ENCODE measurements at regions of chr21 and their contacts with region 1.

Region 1: DNA sequence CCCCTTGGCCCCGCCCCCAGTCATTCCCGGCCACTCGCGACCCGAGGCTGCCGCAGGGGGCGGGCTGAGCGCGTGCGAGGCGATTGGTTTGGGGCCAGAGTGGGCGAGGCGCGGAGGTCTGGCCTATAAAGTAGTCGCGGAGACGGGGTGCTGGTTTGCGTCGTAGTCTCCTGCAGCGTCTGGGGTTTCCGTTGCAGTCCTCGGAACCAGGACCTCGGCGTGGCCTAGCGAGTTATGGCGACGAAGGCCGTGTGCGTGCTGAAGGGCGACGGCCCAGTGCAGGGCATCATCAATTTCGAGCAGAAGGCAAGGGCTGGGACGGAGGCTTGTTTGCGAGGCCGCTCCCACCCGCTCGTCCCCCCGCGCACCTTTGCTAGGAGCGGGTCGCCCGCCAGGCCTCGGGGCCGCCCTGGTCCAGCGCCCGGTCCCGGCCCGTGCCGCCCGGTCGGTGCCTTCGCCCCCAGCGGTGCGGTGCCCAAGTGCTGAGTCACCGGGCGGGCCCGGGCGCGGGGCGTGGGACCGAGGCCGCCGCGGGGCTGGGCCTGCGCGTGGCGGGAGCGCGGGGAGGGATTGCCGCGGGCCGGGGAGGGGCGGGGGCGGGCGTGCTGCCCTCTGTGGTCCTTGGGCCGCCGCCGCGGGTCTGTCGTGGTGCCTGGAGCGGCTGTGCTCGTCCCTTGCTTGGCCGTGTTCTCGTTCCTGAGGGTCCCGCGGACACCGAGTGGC is at the start of gene SOD1:
- DNase-seq: peak; percentile 95 to 98 (median 96)
- ATAC-seq: peak; percentile 91
- H3K4me3 ChIP-seq: peak within 1 kb of the TSS; percentile 89
- H3K4me3 Mint-ChIP-seq: peak within 1 kb of the TSS; percentile 100
- H3K27ac ChIP-seq: peak within 1 kb of the TSS; percentile 76 to 84
- H3K27ac Mint-ChIP-seq: peak within 1 kb of the TSS; percentile 85
- H3K4me1 ChIP-seq: peaks cover 54% of the 10 kb centered on the region
- H3K4me1 Mint-ChIP-seq: peaks cover 74% of the 10 kb centered on the region
- H3K27me3 ChIP-seq: no peaks in the 10 kb centered on the region
- H3K27me3 Mint-ChIP-seq: no peaks in the 10 kb centered on the region
- CTCF ChIP-seq: no peak
- total RNA-seq, gene SOD1: 158 to 161 TPM

Region 2: GRCh38 chr21:31132574-31133242 is 527.0 kb before region 1 on chr21:
- CTCF ChIA-PET with region 1: no interaction called
- POLR2A ChIA-PET with region 1: interaction called, 4 read pairs
- intact Hi-C with region 1: loop called in 1 of 2 experiments (anchors 2 kb)
- DNase-seq: peak; percentile 52 to 92 (median 71)
- ATAC-seq: peak; percentile 91
- H3K4me3 ChIP-seq: peak overlapping the region; percentile 35
- H3K4me3 Mint-ChIP-seq: peak overlapping the region; percentile 68
- H3K27ac ChIP-seq: peak overlapping the region in 1 of 2 donors; percentile 43
- H3K27ac Mint-ChIP-seq: peak overlapping the region; percentile 79
- H3K4me1 ChIP-seq: peaks cover 33% of the 10 kb centered on the region
- H3K4me1 Mint-ChIP-seq: peaks cover 64% of the 10 kb centered on the region
- H3K27me3 ChIP-seq: no peaks in the 10 kb centered on the region
- H3K27me3 Mint-ChIP-seq: no peaks in the 10 kb centered on the region
- CTCF ChIP-seq: no peak

Region 3: GRCh38 chr21:31185663-31186062 is 474.0 kb before region 1 on chr21:
- CTCF ChIA-PET with region 1: no interaction called
- POLR2A ChIA-PET with region 1: no interaction called
- intact Hi-C with region 1: loop called (anchors 5 kb)
- DNase-seq: peak in 6 of 14 experiments; percentile 22 to 66 (median 50)
- ATAC-seq: peak; percentile 27
- H3K4me3 ChIP-seq: peak overlapping the region; percentile 56
- H3K4me3 Mint-ChIP-seq: peak overlapping the region; percentile 85
- H3K27ac ChIP-seq: peak overlapping the region; percentile 64 to 75
- H3K27ac Mint-ChIP-seq: peak overlapping the region; percentile 97
- H3K4me1 ChIP-seq: peaks cover 76% of the 10 kb centered on the region
- H3K4me1 Mint-ChIP-seq: peaks cover 85% of the 10 kb centered on the region
- H3K27me3 ChIP-seq: no peaks in the 10 kb centered on the region
- H3K27me3 Mint-ChIP-seq: no peaks in the 10 kb centered on the region
- CTCF ChIP-seq: no peak

Region 4: GRCh38 chr21:31700040-31700439 is 40.3 kb after region 1 on chr21:
- CTCF ChIA-PET with region 1: no interaction called
- POLR2A ChIA-PET with region 1: interaction called, 3 read pairs
- intact Hi-C with region 1: loop called in 1 of 2 experiments (anchors 5 kb)
- DNase-seq: no peak
- ATAC-seq: no peak
- H3K4me3 ChIP-seq: no peak overlapping the region
- H3K4me3 Mint-ChIP-seq: no peak overlapping the region
- H3K27ac ChIP-seq: no peak overlapping the region
- H3K27ac Mint-ChIP-seq: no peak overlapping the region
- H3K4me1 ChIP-seq: no peaks in the 10 kb centered on the region
- H3K4me1 Mint-ChIP-seq: peaks cover 13% of the 10 kb centered on the region
- H3K27me3 ChIP-seq: no peaks in the 10 kb centered on the region
- H3K27me3 Mint-ChIP-seq: no peaks in the 10 kb centered on the region
- CTCF ChIP-seq: no peak

Region 5: DNA sequence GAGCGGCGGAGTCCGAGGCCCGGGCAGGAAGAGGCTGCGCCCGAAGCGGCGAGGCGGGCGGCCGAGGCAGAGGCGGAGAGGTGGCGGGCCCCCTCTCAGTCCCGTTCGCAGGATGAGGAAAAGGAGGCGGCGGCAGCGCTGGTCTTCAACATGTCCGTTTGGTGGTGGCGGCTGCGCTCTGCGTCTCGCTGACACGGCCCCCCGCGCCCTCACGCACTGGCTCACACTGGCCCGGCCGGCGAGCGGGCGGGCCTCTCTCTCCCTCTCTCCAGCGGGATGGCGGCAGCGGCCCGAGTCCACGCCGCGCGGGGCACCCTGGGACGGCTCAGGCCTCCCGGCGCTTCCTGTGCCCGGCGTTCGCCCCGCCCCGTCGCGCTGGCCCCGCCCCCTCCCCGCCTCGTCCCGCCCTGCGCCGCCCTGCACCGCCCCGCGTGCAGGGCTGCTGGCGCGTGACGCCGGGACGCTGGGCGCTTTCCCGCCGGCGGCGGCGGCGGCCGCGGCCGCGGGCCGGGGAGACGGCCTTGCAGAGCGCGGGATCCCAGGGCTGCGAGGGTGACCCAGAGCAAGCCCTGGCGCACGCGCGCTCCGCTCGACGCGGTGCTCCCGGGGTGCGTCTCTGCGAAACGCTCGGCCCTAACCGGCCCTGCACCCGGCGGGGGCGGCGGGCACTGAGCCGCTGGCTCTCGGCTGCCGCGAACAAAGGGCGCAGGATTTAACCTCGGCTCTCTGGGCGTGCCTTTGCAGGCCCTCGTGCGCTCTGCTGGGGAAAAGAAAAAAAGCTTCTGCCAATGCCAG is 72.3 kb after region 1 on chr21 and contains the start of gene SCAF4:
- CTCF ChIA-PET with region 1: no interaction called
- POLR2A ChIA-PET with region 1: interaction called, 3 read pairs
- intact Hi-C with region 1: loop called (anchors 1 kb)
- DNase-seq: peak; percentile 54 to 93 (median 74)
- ATAC-seq: peak; percentile 82
- H3K4me3 ChIP-seq: peak within 1 kb of the TSS; percentile 82
- H3K4me3 Mint-ChIP-seq: peak within 1 kb of the TSS; percentile 97
- H3K27ac ChIP-seq: peak within 1 kb of the TSS; percentile 67 to 82
- H3K27ac Mint-ChIP-seq: no peak within 1 kb of the TSS
- H3K4me1 ChIP-seq: peaks cover 44% of the 10 kb centered on the region
- H3K4me1 Mint-ChIP-seq: no peaks in the 10 kb centered on the region
- H3K27me3 ChIP-seq: no peaks in the 10 kb centered on the region
- H3K27me3 Mint-ChIP-seq: no peaks in the 10 kb centered on the region
- CTCF ChIP-seq: no peak
- total RNA-seq, gene SCAF4: 56.1 to 57.8 TPM

Region 6: DNA sequence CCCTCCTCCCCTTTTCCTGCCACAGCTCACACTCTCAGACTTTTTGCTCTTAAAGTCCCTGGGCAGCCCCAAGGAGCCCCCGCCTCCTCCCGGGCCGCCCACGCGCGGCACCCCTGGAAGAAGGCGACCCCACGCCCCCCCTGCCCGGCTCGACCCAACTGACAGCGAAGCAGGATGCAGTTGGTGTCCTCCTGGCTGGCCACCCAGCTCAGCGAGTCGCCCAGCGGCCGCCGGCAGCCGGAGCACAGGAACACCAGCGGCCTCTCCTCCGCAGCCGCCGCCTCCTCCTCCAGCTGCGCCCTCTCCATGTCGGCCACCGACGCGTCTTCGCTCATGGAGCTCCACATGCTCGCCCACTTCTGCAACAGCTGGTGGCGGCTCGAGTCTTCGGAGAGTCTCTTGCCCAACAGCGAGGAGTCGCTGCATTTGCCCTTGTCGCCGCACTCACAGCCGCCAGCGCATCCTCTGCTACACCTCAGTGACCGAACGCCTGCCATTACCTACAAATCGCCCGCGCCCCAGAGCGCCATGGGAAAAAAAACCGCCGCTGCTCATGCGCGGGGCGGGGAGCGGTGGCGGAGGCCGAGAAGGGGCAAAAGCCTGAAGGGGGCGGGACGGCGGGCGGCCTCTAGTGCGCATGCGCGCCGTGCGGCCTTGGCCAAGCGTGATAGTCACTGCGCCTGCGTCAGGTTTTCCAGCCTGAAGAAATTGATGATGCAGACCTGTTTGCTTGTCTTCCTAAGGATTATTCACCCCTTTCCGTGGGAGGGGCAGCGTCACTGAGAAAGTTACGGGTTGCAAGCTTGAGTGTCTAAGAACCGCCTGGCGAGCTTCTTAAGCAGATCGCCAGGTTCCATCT is 619.0 kb after region 1 on chr21 and contains the start of gene MIS18A:
- CTCF ChIA-PET with region 1: no interaction called
- POLR2A ChIA-PET with region 1: no interaction called
- intact Hi-C with region 1: loop called in 1 of 2 experiments (anchors 10 kb)
- DNase-seq: peak; percentile 92 to 99 (median 97)
- ATAC-seq: peak; percentile 94
- H3K4me3 ChIP-seq: peak within 1 kb of the TSS; percentile 94
- H3K4me3 Mint-ChIP-seq: peak within 1 kb of the TSS; percentile 99
- H3K27ac ChIP-seq: peak within 1 kb of the TSS in 1 of 2 donors; percentile 26
- H3K27ac Mint-ChIP-seq: peak within 1 kb of the TSS; percentile 94
- H3K4me1 ChIP-seq: peaks cover 20% of the 10 kb centered on the region
- H3K4me1 Mint-ChIP-seq: peaks cover 29% of the 10 kb centered on the region
- H3K27me3 ChIP-seq: no peaks in the 10 kb centered on the region
- H3K27me3 Mint-ChIP-seq: no peaks in the 10 kb centered on the region
- CTCF ChIP-seq: no peak
- total RNA-seq, gene MIS18A: 2.7 to 3.0 TPM